MCF 10A (cell line): ENCODE measurements at regions of chr3 and their contacts with region 1.

Region 1: DNA sequence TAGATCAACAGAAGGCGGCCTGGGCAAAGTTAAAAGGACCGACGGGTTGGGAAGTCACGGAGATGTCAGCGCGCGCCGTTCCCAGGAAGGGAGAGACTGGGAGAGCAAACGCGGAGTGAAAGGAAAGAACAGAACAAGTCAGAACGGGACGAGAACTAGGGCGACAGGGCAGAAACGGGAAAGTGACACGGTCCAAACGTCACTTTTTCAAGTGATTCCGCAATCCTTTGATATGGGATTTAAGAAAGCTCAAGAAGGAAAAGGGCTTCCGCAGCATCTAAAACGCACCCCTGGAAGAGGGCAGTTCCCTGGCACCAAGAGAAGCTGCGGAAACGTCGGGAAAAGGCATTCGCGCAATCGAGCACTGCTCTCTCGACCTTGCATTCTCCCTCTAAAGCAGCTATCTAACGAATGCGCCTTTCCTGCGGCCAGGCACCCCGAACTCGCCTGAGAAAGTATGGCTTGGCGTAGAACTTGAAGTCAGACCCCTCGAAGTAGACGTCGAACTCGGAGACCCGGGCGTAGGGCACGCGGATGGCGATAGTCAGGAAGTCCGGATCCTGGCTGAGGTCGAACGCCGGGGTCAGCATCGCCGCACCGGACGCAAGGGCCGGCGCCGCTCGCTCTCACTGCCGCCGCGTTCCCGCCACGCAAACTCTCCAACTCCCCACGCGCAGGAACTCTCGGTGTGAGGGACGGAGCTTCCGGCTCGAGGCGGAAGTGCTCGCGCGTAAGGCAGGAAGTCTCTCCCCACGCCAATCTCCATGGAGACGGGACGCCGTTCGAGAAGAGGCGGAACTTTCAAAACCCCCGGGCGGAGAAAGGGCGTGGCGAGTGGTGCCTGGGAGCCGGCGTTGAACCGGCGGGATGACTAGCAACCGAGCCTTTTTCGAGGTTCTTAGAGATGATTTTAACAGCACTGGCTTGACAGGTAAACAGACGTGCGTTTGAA is at the start of gene SHQ1:
- DNase-seq: peak; percentile 96
- H3K4me3 Mint-ChIP-seq: peak within 1 kb of the TSS; percentile 91
- H3K27ac Mint-ChIP-seq: peak within 1 kb of the TSS; percentile 89
- H3K4me1 Mint-ChIP-seq: peaks cover 32% of the 10 kb centered on the region
- H3K27me3 Mint-ChIP-seq: no peaks in the 10 kb centered on the region
- CTCF ChIP-seq: no peak
- total RNA-seq, gene SHQ1: 17.4 and 30.4 TPM in 2 replicates

Region 2: GRCh38 chr3:72860846-72861245 is 12.8 kb after region 1 on chr3:
- CTCF ChIA-PET with region 1: interaction called, 13 read pairs
- POLR2A ChIA-PET with region 1: no interaction called
- intact Hi-C with region 1: no loop called
- DNase-seq: no peak
- H3K4me3 Mint-ChIP-seq: no peak overlapping the region
- H3K27ac Mint-ChIP-seq: no peak overlapping the region
- H3K4me1 Mint-ChIP-seq: no peaks in the 10 kb centered on the region
- H3K27me3 Mint-ChIP-seq: no peaks in the 10 kb centered on the region
- CTCF ChIP-seq: no peak

Region 3: DNA sequence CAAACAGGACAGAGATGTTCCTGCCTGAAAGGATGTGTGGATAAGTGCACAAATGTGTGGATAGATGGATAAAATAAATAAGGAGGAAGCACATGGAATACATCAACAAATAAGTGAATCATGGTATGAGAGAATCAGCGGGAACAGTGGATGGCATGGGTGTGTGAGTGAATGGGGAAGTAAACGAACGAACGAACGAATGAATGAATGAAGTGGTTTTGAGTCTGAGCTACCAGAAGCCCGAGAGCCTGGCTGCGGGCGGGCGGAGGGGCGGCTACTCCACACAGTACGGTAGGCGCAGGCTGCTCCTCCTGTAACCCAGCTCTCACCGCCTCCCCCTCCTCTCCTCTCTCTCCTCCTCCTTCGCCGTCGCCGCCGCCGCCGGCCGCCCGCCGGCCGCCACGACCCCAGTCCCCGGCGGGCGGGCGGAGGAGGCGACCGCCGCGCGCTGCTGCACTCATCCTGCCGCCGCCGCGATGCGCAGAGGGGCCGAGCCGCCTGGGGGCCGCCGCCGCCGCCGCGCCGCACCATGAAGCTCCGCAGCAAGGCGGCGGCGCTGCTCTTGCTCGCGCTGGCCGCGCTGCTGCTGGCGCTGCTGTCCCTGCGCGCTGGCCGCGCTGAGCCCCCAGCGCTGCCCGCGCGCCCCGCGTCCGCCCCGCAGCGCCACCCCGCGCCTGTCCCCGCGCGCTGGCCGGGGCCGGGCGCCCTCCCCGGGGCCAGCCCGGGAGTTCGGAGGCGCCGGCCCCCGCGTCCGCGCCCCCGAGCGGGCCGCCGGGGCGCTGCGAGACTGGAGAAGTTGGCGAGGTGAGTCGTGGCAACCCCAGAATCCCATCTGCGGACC is 39.9 kb after region 1 on chr3 and contains the start of gene GXYLT2:
- CTCF ChIA-PET with region 1: interaction called, 35 read pairs
- POLR2A ChIA-PET with region 1: interaction called, 17 read pairs
- intact Hi-C with region 1: loop called (anchors 2 kb)
- DNase-seq: peak; percentile 63
- H3K4me3 Mint-ChIP-seq: peak within 1 kb of the TSS; percentile 79
- H3K27ac Mint-ChIP-seq: no peak within 1 kb of the TSS
- H3K4me1 Mint-ChIP-seq: peaks cover 40% of the 10 kb centered on the region
- H3K27me3 Mint-ChIP-seq: no peaks in the 10 kb centered on the region
- CTCF ChIP-seq: no peak
- total RNA-seq, gene GXYLT2: 3.9 and 4.1 TPM in 2 replicates

Region 4: DNA sequence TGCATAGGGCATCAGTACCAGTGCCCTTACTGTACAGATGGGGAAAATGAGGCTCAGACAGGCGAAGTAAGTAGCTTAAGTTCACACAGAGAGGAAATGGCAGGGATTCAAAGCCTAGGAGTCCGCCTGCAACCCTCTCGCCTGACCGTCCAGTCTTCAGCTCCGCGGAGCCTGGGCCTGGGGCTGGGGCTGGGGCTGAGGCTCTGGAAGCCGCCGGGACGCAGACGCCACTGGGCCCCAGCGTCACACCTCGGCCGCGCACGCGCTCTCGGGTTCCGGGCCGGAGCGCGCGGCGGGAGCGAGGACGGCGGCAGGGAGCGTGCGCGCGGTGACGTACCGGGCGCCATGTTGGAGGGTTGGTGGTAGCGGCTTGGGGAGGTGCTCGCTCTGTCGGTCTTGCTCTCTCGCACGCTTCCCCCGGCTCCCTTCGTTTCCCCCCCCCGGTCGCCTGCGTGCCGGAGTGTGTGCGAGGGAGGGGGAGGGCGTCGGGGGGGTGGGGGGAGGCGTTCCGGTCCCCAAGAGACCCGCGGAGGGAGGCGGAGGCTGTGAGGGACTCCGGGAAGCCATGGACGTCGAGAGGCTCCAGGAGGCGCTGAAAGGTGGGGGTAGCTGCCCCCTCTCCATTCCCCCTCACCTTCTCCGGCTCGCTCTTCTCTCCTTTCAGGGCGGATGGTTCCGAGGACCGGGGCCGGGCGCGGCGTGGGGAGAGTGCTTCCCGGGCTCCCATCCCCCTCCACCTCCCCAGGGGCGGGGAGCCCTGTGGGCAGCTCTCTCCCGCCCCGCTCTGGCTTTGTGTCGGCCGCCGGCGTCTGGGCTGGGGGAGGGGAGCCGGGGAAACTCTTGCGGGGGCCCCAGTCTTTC is 148.7 kb after region 1 on chr3 and contains the start of gene PPP4R2:
- CTCF ChIA-PET with region 1: interaction called, 4 read pairs
- POLR2A ChIA-PET with region 1: interaction called, 8 read pairs
- intact Hi-C with region 1: loop called (anchors 2 kb)
- DNase-seq: peak; percentile 87
- H3K4me3 Mint-ChIP-seq: peak within 1 kb of the TSS; percentile 86
- H3K27ac Mint-ChIP-seq: peak within 1 kb of the TSS; percentile 29
- H3K4me1 Mint-ChIP-seq: peaks cover 18% of the 10 kb centered on the region
- H3K27me3 Mint-ChIP-seq: no peaks in the 10 kb centered on the region
- CTCF ChIP-seq: no peak
- total RNA-seq, gene PPP4R2: 86.3 and 105 TPM in 2 replicates

Region 5: GRCh38 chr3:73086071-73086494 is 238.1 kb after region 1 on chr3:
- CTCF ChIA-PET with region 1: interaction called, 221 read pairs
- POLR2A ChIA-PET with region 1: interaction called, 9 read pairs
- intact Hi-C with region 1: loop called (anchors 1 kb)
- DNase-seq: peak; percentile 54
- H3K4me3 Mint-ChIP-seq: no peak overlapping the region
- H3K27ac Mint-ChIP-seq: no peak overlapping the region
- H3K4me1 Mint-ChIP-seq: no peaks in the 10 kb centered on the region
- H3K27me3 Mint-ChIP-seq: no peaks in the 10 kb centered on the region
- CTCF ChIP-seq: peak; percentile 78